IMR-90 (cell line): ENCODE measurements at regions of chr14 and their contacts with region 1.

Region 1: DNA sequence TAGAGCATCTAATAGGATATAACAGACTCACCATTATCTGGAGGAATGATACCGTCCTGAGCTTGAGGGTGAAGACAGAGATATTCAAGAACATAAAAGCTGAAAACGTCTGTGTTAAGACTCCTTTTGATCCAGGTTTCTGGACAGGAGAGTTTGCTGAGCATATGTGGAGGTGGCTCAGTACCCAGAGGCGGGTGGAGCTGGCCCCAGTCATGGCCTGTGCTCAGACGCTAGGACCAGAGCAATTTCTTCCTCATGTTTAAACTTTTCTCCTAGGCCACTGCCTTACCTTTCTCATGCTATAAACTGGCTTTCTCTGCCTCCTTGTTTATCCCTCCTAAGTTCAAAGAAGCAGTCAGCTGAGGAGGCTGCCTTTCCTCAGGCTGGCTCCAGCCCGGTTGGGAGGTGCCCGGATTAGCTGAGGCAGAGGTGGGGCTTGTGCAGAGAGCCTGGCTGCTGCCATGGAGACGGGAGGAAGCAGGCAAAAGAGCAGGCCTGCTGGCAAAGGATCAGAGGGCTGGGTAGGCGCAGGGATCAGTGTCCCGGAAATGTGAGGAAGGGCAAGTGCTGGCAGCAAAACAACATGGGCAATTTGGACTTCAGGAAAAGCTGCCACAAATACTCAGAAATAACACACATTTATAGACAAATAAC is 13.7 kb downstream of the COA8 start:
- DNase-seq: peak; percentile 80
- ATAC-seq: peak; percentile 95
- H3K4me3 ChIP-seq: no peak overlapping the region
- H3K27ac ChIP-seq: peak overlapping the region; percentile 6; the same call in 1 of the 2 replicates
- H3K4me1 ChIP-seq: peaks cover 15% of the 10 kb centered on the region
- H3K27me3 ChIP-seq: no peaks in the 10 kb centered on the region
- CTCF ChIP-seq: no peak
- POLR2A ChIP-seq: no peak
- RAD21 ChIP-seq: peak; percentile 11; the same call in 1 of the 2 replicates

Region 2: GRCh38 chr14:103259918-103260619 is 316.4 kb before region 1 on chr14:
- CTCF ChIA-PET with region 1: no interaction called
- POLR2A ChIA-PET with region 1: no interaction called
- dilution Hi-C with region 1: no loop called
- in situ Hi-C with region 1: no loop called
- intact Hi-C with region 1: no loop called
- DNase-seq: no peak
- ATAC-seq: peak; percentile 84
- H3K4me3 ChIP-seq: peak overlapping the region; percentile 85
- H3K27ac ChIP-seq: peak overlapping the region; percentile 22
- H3K4me1 ChIP-seq: no peaks in the 10 kb centered on the region
- H3K27me3 ChIP-seq: peaks cover 7% of the 10 kb centered on the region
- CTCF ChIP-seq: no peak
- POLR2A ChIP-seq: no peak
- RAD21 ChIP-seq: no peak

Region 3: GRCh38 chr14:103679351-103679750 is 102.9 kb after region 1 on chr14:
- CTCF ChIA-PET with region 1: interaction called, 3 read pairs
- POLR2A ChIA-PET with region 1: no interaction called
- dilution Hi-C with region 1: no loop called
- in situ Hi-C with region 1: loop called (anchors 10 kb)
- intact Hi-C with region 1: loop called (anchors 2 kb)
- DNase-seq: no peak
- ATAC-seq: peak; percentile 51
- H3K4me3 ChIP-seq: no peak overlapping the region
- H3K27ac ChIP-seq: no peak overlapping the region
- H3K4me1 ChIP-seq: peaks cover 4% of the 10 kb centered on the region; the same call in 1 of the 2 replicates
- H3K27me3 ChIP-seq: no peaks in the 10 kb centered on the region
- CTCF ChIP-seq: peak; percentile 31; the same call in 1 of the 2 replicates
- POLR2A ChIP-seq: no peak
- RAD21 ChIP-seq: peak; percentile 42

Region 4: GRCh38 chr14:103688906-103689902 is 112.7 kb after region 1 on chr14:
- CTCF ChIA-PET with region 1: interaction called, 3 read pairs
- POLR2A ChIA-PET with region 1: no interaction called
- dilution Hi-C with region 1: no loop called
- in situ Hi-C with region 1: loop called (anchors 10 kb)
- intact Hi-C with region 1: no loop called
- DNase-seq: no peak
- ATAC-seq: no peak
- H3K4me3 ChIP-seq: no peak overlapping the region
- H3K27ac ChIP-seq: no peak overlapping the region
- H3K4me1 ChIP-seq: peaks cover 6% of the 10 kb centered on the region
- H3K27me3 ChIP-seq: no peaks in the 10 kb centered on the region
- CTCF ChIP-seq: no peak
- POLR2A ChIP-seq: no peak
- RAD21 ChIP-seq: no peak

Region 5: DNA sequence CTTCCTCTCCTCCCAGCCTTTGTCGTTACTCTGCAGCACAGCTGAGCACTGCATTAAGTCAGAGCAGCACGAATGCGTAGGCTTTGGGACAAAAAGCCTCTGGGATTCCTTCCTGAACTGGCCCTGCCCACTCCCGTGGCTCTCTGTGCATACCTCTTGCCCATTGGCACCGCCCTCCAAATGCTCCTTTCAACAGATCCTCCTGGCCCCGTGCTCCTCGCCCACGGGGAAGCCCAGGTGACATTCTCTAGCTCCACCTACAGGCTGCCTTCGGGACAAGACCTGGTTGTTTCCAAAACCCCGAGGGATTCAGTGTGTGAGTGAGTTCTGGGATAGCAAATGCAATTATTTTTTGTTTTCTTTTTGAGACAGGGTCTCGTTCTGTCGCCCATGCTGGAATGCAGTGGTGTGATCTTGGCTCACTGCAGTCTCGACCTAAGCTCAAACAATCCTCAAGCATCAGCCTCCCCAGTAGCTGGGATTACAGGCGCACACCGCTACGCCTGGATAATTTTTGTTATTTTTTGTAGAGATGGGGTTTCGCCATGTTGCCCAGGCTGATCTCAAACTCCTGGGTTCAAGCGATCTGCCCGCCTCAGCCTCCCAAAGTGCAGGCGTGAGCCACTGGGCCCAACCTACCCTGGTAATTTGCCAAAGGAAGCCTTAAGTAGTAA is 333.9 kb after region 1 on chr14:
- CTCF ChIA-PET with region 1: interaction called, 5 read pairs
- POLR2A ChIA-PET with region 1: no interaction called
- dilution Hi-C with region 1: no loop called
- in situ Hi-C with region 1: loop called (anchors 10 kb)
- intact Hi-C with region 1: loop called (anchors 5 kb)
- DNase-seq: peak; percentile 66
- ATAC-seq: peak; percentile 93
- H3K4me3 ChIP-seq: no peak overlapping the region
- H3K27ac ChIP-seq: no peak overlapping the region
- H3K4me1 ChIP-seq: no peaks in the 10 kb centered on the region
- H3K27me3 ChIP-seq: no peaks in the 10 kb centered on the region
- CTCF ChIP-seq: peak; percentile 75
- POLR2A ChIP-seq: no peak
- RAD21 ChIP-seq: peak; percentile 77

Region 6: DNA sequence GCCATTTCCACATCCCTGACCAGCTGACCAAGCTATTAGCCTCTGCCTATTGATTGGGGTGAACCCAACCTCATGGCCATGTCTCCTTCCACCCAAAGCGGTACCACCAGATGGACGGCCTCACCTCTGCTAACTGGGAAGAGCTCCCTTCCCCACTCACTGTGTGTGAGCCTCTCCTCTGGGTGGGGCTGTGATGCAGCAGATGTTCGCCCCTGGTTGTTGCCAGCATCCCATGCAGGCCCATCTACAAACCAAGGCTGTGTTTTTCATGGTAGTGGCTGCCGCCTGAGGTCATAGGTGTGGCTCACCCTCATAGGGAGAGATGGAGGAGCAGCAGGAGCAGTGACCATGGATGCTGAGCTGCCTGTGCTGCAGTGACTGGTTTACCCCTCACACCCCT is 413.5 kb after region 1 on chr14:
- CTCF ChIA-PET with region 1: no interaction called
- POLR2A ChIA-PET with region 1: interaction called, 4 read pairs
- dilution Hi-C with region 1: no loop called
- in situ Hi-C with region 1: no loop called
- intact Hi-C with region 1: loop called (anchors 10 kb)
- DNase-seq: no peak
- ATAC-seq: no peak
- H3K4me3 ChIP-seq: no peak overlapping the region
- H3K27ac ChIP-seq: no peak overlapping the region
- H3K4me1 ChIP-seq: no peaks in the 10 kb centered on the region
- H3K27me3 ChIP-seq: no peaks in the 10 kb centered on the region
- CTCF ChIP-seq: no peak
- POLR2A ChIP-seq: no peak
- RAD21 ChIP-seq: no peak